Astrocyte of the cerebellum (primary cell): ENCODE measurements at regions of chr1 and their contacts with region 1.

Region 1: GRCh38 chr1:113109908-113110554 is 37.0 kb downstream of the LRIG2 start:
- DNase-seq: peak; percentile 74
- H3K4me3 ChIP-seq: no peak overlapping the region
- CTCF ChIP-seq: peak; percentile 58

Region 2: GRCh38 chr1:112369392-112370285 is 740.4 kb before region 1 on chr1:
- in situ Hi-C with region 1: no loop called
- DNase-seq: peak; percentile 49
- H3K4me3 ChIP-seq: no peak overlapping the region
- CTCF ChIP-seq: peak; percentile 99

Region 3: DNA sequence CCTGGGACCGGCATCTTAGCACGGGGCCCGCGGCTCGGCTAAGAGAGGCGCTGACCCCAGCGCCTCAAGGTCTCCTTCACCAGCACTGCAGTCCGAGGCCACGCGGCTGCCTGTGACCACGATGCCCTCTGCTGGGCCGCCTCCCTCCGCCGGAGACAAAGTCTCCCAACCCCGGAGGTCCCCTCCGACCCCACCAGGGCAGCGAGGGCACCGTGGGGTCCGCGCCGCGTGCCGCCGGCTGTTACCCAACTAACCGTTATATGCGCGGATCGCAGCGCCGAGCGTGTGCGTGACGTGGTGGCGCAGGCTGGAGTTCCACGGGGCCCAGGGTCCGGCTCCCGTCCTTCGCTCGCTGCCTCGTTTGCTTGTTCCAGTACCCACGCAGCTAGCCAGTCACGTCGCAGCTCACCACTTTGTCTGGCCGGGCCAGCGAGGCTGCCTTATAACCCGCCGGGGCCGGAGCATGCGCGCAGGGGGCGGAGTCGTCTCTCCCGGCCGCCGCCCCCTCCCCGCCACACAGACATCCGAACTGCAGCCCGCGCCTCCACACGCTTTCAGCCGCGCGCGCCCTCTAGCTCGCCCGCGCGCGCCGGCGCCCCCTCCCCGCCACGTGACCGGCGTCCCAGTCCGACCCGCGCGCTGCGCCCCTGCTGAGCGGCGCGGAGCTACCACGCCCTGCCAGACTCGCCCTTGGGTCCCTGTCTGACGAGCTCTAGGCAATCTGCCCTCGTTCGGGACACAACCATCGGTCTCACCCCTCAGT is 154.1 kb before region 1 on chr1 and contains the start of gene SLC16A1:
- in situ Hi-C with region 1: no loop called
- DNase-seq: peak; percentile 73
- H3K4me3 ChIP-seq: peak within 1 kb of the TSS; percentile 64
- CTCF ChIP-seq: no peak

Region 4: DNA sequence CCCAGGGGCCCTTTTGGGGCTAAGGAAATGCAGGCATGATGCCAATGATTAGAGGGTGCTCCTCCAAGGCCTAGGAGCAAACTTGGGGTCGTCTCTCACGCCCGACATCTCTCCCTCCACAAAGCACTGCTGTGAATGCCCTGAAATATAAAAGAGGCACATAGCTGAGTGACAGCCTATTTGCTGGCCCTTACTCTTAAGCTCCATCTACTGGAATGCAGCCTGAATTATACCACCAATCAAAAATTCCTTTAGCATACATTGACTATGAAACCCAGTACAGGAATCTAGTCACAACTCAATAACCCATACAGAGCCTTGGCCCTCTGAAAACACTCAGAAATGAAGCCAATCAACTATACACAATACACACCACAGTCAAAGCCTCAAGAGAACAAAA is 68.5 kb after region 1 on chr1:
- in situ Hi-C with region 1: no loop called
- DNase-seq: no peak
- H3K4me3 ChIP-seq: no peak overlapping the region
- CTCF ChIP-seq: peak; percentile 20

Region 5: GRCh38 chr1:113684153-113684541 is 574.1 kb after region 1 on chr1:
- in situ Hi-C with region 1: loop called (anchors 10 kb)
- DNase-seq: no peak
- H3K4me3 ChIP-seq: no peak overlapping the region
- CTCF ChIP-seq: no peak